ENCODE measurements at regions of chr2 and their contacts with region 1.

Region 1: GRCh38 chr2:84223191-84223590 is 235.9 kb downstream of the SUCLG1 start:
- DNase-seq: peak; percentile 0
- ATAC-seq: no peak
- H3K4me3 ChIP-seq: no peak overlapping the region
- H3K27ac ChIP-seq: no peak overlapping the region
- H3K4me1 ChIP-seq: no peaks in the 10 kb centered on the region
- H3K27me3 ChIP-seq: no peaks in the 10 kb centered on the region
- CTCF ChIP-seq: no peak
- POLR2A ChIP-seq: no peak
- RAD21 ChIP-seq: no peak

Region 2: GRCh38 chr2:84197901-84198300 is 25.3 kb before region 1 on chr2:
- CTCF ChIA-PET with region 1: no interaction called
- POLR2A ChIA-PET with region 1: no interaction called
- dilution Hi-C with region 1: no loop called
- in situ Hi-C with region 1: no loop called
- intact Hi-C with region 1: loop called (anchors 2 kb)
- DNase-seq: no peak
- ATAC-seq: no peak
- H3K4me3 ChIP-seq: no peak overlapping the region
- H3K27ac ChIP-seq: no peak overlapping the region
- H3K4me1 ChIP-seq: no peaks in the 10 kb centered on the region
- H3K27me3 ChIP-seq: no peaks in the 10 kb centered on the region
- CTCF ChIP-seq: no peak
- POLR2A ChIP-seq: no peak
- RAD21 ChIP-seq: no peak

Measured in IMR-90 (cell line).